Activated CD4-positive, alpha-beta memory T cell treated with anti-CD3 and anti-CD28 coated beads for 36 hours (primary cell): ENCODE measurements at regions of chr9 and their contacts with region 1.

Region 1: GRCh38 chr9:73162987-73163768 is 11.5 kb downstream of the ANXA1 start:
- DNase-seq: peak; percentile 31
- H3K4me3 Mint-ChIP-seq: peak overlapping the region; percentile 20
- H3K27ac Mint-ChIP-seq: peak overlapping the region; percentile 85
- H3K4me1 Mint-ChIP-seq: peaks cover 54% of the 10 kb centered on the region
- H3K27me3 Mint-ChIP-seq: no peaks in the 10 kb centered on the region

Region 2: DNA sequence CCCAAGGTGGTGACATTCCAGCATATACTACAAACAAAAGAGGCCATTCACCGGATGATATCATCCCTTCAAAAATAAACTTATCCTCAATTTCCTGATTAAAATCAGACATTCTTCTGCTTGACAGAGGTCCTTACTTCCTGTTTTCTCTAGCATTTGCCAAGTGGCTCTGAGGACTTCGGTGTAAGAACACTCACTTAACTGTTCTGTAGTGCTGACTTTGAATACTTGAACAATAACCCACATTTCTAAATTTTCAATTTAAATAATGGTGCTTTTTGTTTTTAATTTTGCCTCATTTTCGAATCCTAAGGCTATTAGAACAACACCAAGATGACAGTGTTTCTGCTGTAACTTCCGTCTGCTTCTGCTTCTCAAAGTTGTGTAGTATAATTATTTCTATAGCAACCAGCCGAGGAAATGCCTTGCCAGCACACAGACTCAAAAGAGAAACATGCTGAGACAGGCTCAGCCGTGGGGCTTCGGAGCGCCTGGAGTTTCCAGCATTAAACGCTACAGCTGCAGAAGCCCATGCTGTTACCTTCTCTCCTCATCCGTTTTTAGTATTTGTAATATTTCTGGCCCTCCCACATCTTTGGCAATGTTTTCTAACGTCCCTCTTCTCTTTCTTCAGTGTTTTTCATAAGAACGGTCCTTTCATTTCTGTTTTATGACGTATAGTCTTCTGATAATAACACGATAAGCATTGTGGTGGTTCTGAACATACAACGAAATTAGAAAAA is 31.0 kb before region 1 on chr9:
- CTCF ChIA-PET with region 1: interaction called, 3 read pairs
- POLR2A ChIA-PET with region 1: no interaction called
- intact Hi-C with region 1: loop called (anchors 5 kb)
- DNase-seq: peak; percentile 80
- H3K4me3 Mint-ChIP-seq: peak overlapping the region; percentile 78
- H3K27ac Mint-ChIP-seq: peak overlapping the region; percentile 88
- H3K4me1 Mint-ChIP-seq: peaks cover 35% of the 10 kb centered on the region
- H3K27me3 Mint-ChIP-seq: no peaks in the 10 kb centered on the region